B cell (primary cell): ENCODE measurements at regions of chr7 and their contacts with region 1.

Region 1: DNA sequence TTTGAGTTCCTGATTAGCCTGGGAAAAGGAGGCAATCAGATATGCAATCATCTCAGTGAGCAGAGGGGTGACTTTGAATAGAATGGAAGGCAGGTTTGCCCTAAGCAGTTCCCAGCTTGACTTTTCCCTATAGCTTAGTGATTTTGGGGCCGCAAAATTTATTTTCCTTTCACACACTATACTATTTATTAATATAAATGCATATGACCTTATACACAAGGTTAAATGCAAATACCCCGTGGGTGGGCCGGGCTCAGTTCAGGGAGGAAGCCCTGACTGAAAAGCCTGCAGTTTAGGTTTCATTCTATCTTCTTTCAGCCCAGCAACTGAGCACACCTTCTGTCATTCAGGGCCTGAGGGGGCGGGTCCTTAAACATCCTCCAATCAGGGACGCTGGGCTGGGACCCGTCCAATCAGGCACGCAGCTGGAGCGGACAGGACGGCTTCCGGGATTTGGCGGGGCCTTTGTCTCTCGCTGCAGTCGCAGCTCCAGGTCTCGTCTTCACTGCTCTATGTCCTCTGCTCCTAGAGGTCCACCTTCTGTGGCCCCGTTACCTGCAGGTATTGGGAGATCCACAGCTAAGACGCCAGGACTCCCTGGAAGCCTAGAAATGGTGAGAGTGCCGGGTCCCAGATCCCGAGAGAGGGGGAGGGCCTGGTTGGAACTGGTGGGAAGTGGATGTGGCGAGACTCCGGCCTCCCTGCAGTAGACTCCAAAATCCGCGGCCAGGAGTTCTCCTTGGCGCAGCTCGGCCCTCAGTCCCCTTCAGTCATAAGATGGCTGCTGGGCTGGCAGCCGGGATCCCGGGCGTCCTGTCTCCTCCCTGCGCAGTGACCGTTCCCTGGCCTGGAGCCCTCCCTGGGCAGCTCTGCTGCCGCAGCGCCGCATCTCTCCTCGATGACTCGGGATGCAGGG is at the start of gene ZNF273:
- DNase-seq: peak; percentile 89
- ATAC-seq: peak; percentile 99
- H3K4me3 ChIP-seq: peak within 1 kb of the TSS; percentile 53 to 98 (median 96)
- H3K4me3 Mint-ChIP-seq: peak within 1 kb of the TSS; percentile 98
- H3K27ac ChIP-seq: peak within 1 kb of the TSS; percentile 83 to 88
- H3K27ac Mint-ChIP-seq: peak within 1 kb of the TSS; percentile 94
- H3K4me1 ChIP-seq: peaks cover 22 to 42% of the 10 kb centered on the region in 2 donors
- H3K4me1 Mint-ChIP-seq: peaks cover 47% of the 10 kb centered on the region
- H3K27me3 ChIP-seq: no peaks in the 10 kb centered on the region
- H3K27me3 Mint-ChIP-seq: no peaks in the 10 kb centered on the region
- CTCF ChIP-seq: no peak
- total RNA-seq, gene ZNF273: 12.6 and 12.7 TPM in 2 replicates

Region 2: GRCh38 chr7:64183126-64183742 is 719.8 kb before region 1 on chr7:
- CTCF ChIA-PET with region 1: no interaction called
- POLR2A ChIA-PET with region 1: no interaction called
- intact Hi-C with region 1: no loop called
- DNase-seq: peak; percentile 46
- ATAC-seq: no peak
- H3K4me3 ChIP-seq: no peak overlapping the region
- H3K4me3 Mint-ChIP-seq: no peak overlapping the region
- H3K27ac ChIP-seq: no peak overlapping the region
- H3K27ac Mint-ChIP-seq: no peak overlapping the region
- H3K4me1 ChIP-seq: no peaks in the 10 kb centered on the region
- H3K4me1 Mint-ChIP-seq: no peaks in the 10 kb centered on the region
- H3K27me3 ChIP-seq: no peaks in the 10 kb centered on the region
- H3K27me3 Mint-ChIP-seq: no peaks in the 10 kb centered on the region
- CTCF ChIP-seq: peak; percentile 69

Region 3: GRCh38 chr7:64562626-64563275 is 340.3 kb before region 1 on chr7 and contains the start of gene ZNF680:
- CTCF ChIA-PET with region 1: no interaction called
- POLR2A ChIA-PET with region 1: no interaction called
- intact Hi-C with region 1: loop called (anchors 1 kb)
- DNase-seq: peak; percentile 88
- ATAC-seq: peak; percentile 99
- H3K4me3 ChIP-seq: peak within 1 kb of the TSS; percentile 68 to 99 (median 91)
- H3K4me3 Mint-ChIP-seq: peak within 1 kb of the TSS; percentile 100
- H3K27ac ChIP-seq: peak within 1 kb of the TSS; percentile 54 to 74
- H3K27ac Mint-ChIP-seq: peak within 1 kb of the TSS; percentile 96
- H3K4me1 ChIP-seq: peaks cover 0 to 13% of the 10 kb centered on the region in 2 donors
- H3K4me1 Mint-ChIP-seq: peaks cover 30% of the 10 kb centered on the region
- H3K27me3 ChIP-seq: no peaks in the 10 kb centered on the region
- H3K27me3 Mint-ChIP-seq: no peaks in the 10 kb centered on the region
- CTCF ChIP-seq: no peak
- total RNA-seq, gene ZNF680: 27.3 and 27.8 TPM in 2 replicates

Region 4: GRCh38 chr7:64686493-64687184 is 216.4 kb before region 1 on chr7:
- CTCF ChIA-PET with region 1: no interaction called
- POLR2A ChIA-PET with region 1: no interaction called
- intact Hi-C with region 1: loop called (anchors 1 kb)
- DNase-seq: peak; percentile 8
- ATAC-seq: peak; percentile 83
- H3K4me3 ChIP-seq: peak overlapping the region in 3 of 5 experiments; percentile 5 to 45 (median 13)
- H3K4me3 Mint-ChIP-seq: peak overlapping the region; percentile 85
- H3K27ac ChIP-seq: peak overlapping the region; percentile 85 to 88
- H3K27ac Mint-ChIP-seq: no peak overlapping the region
- H3K4me1 ChIP-seq: peaks cover 11 to 62% of the 10 kb centered on the region in 2 donors
- H3K4me1 Mint-ChIP-seq: peaks cover 69% of the 10 kb centered on the region
- H3K27me3 ChIP-seq: no peaks in the 10 kb centered on the region
- H3K27me3 Mint-ChIP-seq: no peaks in the 10 kb centered on the region
- CTCF ChIP-seq: no peak

Region 5: DNA sequence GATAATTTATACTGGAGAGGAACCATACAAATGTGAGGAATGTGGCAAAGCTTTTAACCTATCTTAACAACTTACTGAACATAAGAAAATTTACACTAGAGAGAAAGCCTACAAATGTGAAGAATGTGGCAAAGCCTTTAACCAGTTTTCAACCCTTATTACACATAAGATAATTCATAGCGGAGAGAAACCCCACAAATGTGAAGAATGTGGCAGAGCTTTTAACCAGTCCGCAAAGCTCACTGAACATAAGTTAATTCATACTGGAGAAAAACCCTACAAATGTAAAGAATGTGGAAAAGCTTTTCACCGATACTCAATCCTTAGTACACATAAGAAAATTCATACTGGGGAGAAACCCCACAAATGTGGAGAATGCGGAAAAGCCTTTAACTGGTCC is 70.9 kb before region 1 on chr7:
- CTCF ChIA-PET with region 1: no interaction called
- POLR2A ChIA-PET with region 1: no interaction called
- intact Hi-C with region 1: loop called (anchors 10 kb)
- DNase-seq: no peak
- ATAC-seq: no peak
- H3K4me3 ChIP-seq: no peak overlapping the region
- H3K4me3 Mint-ChIP-seq: no peak overlapping the region
- H3K27ac ChIP-seq: no peak overlapping the region
- H3K27ac Mint-ChIP-seq: no peak overlapping the region
- H3K4me1 ChIP-seq: no peaks in the 10 kb centered on the region
- H3K4me1 Mint-ChIP-seq: no peaks in the 10 kb centered on the region
- H3K27me3 ChIP-seq: no peaks in the 10 kb centered on the region
- H3K27me3 Mint-ChIP-seq: no peaks in the 10 kb centered on the region
- CTCF ChIP-seq: no peak

Region 6: GRCh38 chr7:64934478-64934877 is 31.4 kb after region 1 on chr7:
- CTCF ChIA-PET with region 1: no interaction called
- POLR2A ChIA-PET with region 1: no interaction called
- intact Hi-C with region 1: no loop called
- DNase-seq: no peak
- ATAC-seq: no peak
- H3K4me3 ChIP-seq: no peak overlapping the region
- H3K4me3 Mint-ChIP-seq: no peak overlapping the region
- H3K27ac ChIP-seq: no peak overlapping the region
- H3K27ac Mint-ChIP-seq: no peak overlapping the region
- H3K4me1 ChIP-seq: no peaks in the 10 kb centered on the region
- H3K4me1 Mint-ChIP-seq: no peaks in the 10 kb centered on the region
- H3K27me3 ChIP-seq: no peaks in the 10 kb centered on the region
- H3K27me3 Mint-ChIP-seq: no peaks in the 10 kb centered on the region
- CTCF ChIP-seq: no peak

Region 7: DNA sequence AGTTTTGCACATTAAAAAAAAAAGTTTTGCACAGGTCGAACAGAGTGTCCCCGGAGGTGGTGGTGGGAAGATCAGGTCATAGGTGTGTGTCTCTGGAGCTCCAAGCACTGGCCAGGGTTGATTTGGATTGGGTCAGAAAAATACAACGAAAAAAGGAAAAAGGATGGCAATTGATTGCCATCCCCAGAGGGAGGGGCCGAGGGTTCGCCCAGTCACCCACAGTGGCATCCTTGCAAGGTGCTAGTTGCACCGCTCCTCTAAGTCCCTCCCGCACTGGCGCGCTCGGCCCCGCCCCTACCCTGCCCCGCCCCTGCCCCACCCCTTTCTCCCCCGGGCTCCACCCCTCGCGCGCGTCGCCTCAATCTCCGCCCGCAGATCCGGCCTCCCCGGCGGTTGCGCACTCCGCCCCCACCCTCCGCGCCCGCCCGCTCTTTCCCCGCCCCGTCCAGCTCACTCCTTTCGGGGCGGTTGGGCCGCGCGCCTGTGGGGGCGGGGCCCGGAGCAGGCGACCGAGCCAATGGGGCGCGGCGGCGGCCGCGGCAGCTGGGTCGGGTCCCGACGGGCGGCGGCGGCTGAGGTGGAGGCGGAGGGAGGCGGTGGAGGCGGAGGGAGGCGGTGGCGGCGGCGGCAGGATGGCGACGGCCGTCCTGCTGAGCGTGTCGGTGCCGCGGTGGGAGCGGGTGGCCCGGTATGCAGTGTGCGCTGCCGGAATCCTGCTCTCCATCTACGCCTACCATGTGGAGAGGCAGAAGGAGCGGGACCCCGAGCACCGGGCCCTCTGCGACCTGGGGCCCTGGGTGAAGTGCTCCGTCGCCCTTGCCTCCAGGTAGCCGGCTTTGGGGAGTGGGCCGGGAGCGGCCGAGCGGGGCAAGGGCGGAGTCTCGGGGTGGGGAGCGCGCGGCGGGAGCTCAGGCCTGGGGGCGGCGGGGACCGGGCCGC is 134.9 kb after region 1 on chr7:
- CTCF ChIA-PET with region 1: no interaction called
- POLR2A ChIA-PET with region 1: no interaction called
- intact Hi-C with region 1: loop called (anchors 2 kb)
- DNase-seq: peak; percentile 97
- ATAC-seq: peak; percentile 91
- H3K4me3 ChIP-seq: peak overlapping the region in 4 of 5 experiments; percentile 65 to 76 (median 70)
- H3K4me3 Mint-ChIP-seq: peak overlapping the region; percentile 70
- H3K27ac ChIP-seq: peak overlapping the region; percentile 76 to 79
- H3K27ac Mint-ChIP-seq: peak overlapping the region; percentile 72
- H3K4me1 ChIP-seq: peaks cover 9 to 12% of the 10 kb centered on the region in 2 donors
- H3K4me1 Mint-ChIP-seq: peaks cover 8% of the 10 kb centered on the region
- H3K27me3 ChIP-seq: no peaks in the 10 kb centered on the region
- H3K27me3 Mint-ChIP-seq: no peaks in the 10 kb centered on the region
- CTCF ChIP-seq: no peak